ENCODE measurements at regions of chr15 and their contacts with region 1.

Region 1: GRCh38 chr15:93020976-93021772 is 67.8 kb downstream of the RGMA start:
- DNase-seq: no peak
- ATAC-seq: peak in 2 of 4 experiments; percentile 24 to 35
- H3K4me3 ChIP-seq: no peak overlapping the region
- H3K4me3 Mint-ChIP-seq: no peak overlapping the region
- H3K27ac ChIP-seq: no peak overlapping the region
- H3K27ac Mint-ChIP-seq: peak overlapping the region; percentile 83 to 87
- H3K4me1 ChIP-seq: peaks cover 5 to 18% of the 10 kb centered on the region in 2 experiments
- H3K4me1 Mint-ChIP-seq: peaks cover 70 to 87% (median 79%) of the 10 kb centered on the region in 3 donors
- H3K27me3 ChIP-seq: no peaks in the 10 kb centered on the region
- H3K27me3 Mint-ChIP-seq: no peaks in the 10 kb centered on the region

Region 2: GRCh38 chr15:92903941-92904831 is 117.0 kb before region 1 on chr15:
- CTCF ChIA-PET with region 1: no interaction called
- POLR2A ChIA-PET with region 1: interaction called in 1 of 2 experiments, 12 read pairs
- DNase-seq: peak; percentile 96 to 100 (median 99)
- ATAC-seq: peak; percentile 84 to 89 (median 87)
- H3K4me3 ChIP-seq: peak overlapping the region; percentile 87 to 88
- H3K4me3 Mint-ChIP-seq: peak overlapping the region; percentile 93 to 99 (median 99)
- H3K27ac ChIP-seq: peak overlapping the region; percentile 96
- H3K27ac Mint-ChIP-seq: peak overlapping the region; percentile 100
- H3K4me1 ChIP-seq: peaks cover 22 to 59% of the 10 kb centered on the region in 2 experiments
- H3K4me1 Mint-ChIP-seq: peaks cover 62 to 82% (median 68%) of the 10 kb centered on the region in 3 donors
- H3K27me3 ChIP-seq: no peaks in the 10 kb centered on the region
- H3K27me3 Mint-ChIP-seq: no peaks in the 10 kb centered on the region

Region 3: DNA sequence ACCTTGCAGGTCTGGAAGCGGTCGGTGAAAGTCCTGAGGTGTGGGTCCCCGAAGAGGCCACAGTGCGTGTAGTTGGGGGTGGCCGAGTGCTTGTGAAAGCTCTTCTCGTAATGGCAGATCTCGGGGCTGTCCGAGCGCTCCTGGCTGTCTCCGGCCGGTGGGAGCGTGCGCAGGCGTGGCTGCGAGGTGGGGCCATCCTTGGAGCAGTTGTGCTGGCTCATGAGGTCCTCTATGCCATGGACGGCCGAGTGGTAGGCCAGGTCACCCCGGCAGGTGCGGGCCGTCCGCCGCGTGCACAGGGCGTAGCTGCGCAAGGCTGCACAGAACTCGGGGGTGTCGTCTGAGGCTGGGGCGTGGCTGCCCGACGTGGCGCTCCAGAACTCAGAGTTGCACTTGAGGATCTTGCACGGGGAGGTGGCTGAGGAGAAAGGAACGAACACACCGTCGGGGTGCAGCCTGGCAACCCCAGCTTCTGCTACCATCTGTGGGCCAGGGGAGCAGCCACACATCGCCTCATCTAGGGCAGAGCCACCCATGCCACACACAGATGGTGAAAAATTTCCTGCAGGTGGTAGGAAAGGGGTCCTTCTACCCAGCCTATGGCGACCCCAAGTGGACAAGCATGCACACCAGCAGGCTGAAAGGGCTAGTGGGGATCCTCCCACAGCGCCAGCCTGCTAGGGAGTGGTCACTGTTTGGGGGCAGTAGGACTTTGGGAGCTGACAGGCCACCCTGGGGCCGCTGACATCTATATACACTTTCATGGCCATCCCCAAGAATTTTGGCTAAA is 31.1 kb after region 1 on chr15:
- CTCF ChIA-PET with region 1: no interaction called
- POLR2A ChIA-PET with region 1: no interaction called
- DNase-seq: peak in 3 of 35 experiments; percentile 7 to 46 (median 9)
- ATAC-seq: no peak
- H3K4me3 ChIP-seq: no peak overlapping the region
- H3K4me3 Mint-ChIP-seq: no peak overlapping the region
- H3K27ac ChIP-seq: no peak overlapping the region
- H3K27ac Mint-ChIP-seq: no peak overlapping the region
- H3K4me1 ChIP-seq: peaks cover 7 to 42% of the 10 kb centered on the region in 2 experiments
- H3K4me1 Mint-ChIP-seq: peaks cover 18 to 33% (median 21%) of the 10 kb centered on the region in 3 donors
- H3K27me3 ChIP-seq: peaks cover 0 to 24% of the 10 kb centered on the region in 2 experiments
- H3K27me3 Mint-ChIP-seq: peaks cover 0 to 4% of the 10 kb centered on the region in 2 donors

Region 4: GRCh38 chr15:93072411-93073394 is 51.5 kb after region 1 on chr15:
- CTCF ChIA-PET with region 1: no interaction called
- POLR2A ChIA-PET with region 1: interaction called in 1 of 2 experiments, 14 read pairs
- DNase-seq: no peak
- ATAC-seq: peak in 1 of 4 experiments; percentile 20
- H3K4me3 ChIP-seq: peak overlapping the region; percentile 17 to 55
- H3K4me3 Mint-ChIP-seq: peak overlapping the region; percentile 28 to 81 (median 37)
- H3K27ac ChIP-seq: no peak overlapping the region
- H3K27ac Mint-ChIP-seq: no peak overlapping the region
- H3K4me1 ChIP-seq: peaks cover 0 to 15% of the 10 kb centered on the region in 2 experiments
- H3K4me1 Mint-ChIP-seq: peaks cover 16 to 22% (median 17%) of the 10 kb centered on the region in 3 donors
- H3K27me3 ChIP-seq: peaks cover 0 to 56% of the 10 kb centered on the region in 2 experiments
- H3K27me3 Mint-ChIP-seq: peaks cover 49 to 60% of the 10 kb centered on the region in 2 donors

Measured in T-cell (primary cell).